ENCODE measurements at regions of chr1 and their contacts with region 1.

Region 1: DNA sequence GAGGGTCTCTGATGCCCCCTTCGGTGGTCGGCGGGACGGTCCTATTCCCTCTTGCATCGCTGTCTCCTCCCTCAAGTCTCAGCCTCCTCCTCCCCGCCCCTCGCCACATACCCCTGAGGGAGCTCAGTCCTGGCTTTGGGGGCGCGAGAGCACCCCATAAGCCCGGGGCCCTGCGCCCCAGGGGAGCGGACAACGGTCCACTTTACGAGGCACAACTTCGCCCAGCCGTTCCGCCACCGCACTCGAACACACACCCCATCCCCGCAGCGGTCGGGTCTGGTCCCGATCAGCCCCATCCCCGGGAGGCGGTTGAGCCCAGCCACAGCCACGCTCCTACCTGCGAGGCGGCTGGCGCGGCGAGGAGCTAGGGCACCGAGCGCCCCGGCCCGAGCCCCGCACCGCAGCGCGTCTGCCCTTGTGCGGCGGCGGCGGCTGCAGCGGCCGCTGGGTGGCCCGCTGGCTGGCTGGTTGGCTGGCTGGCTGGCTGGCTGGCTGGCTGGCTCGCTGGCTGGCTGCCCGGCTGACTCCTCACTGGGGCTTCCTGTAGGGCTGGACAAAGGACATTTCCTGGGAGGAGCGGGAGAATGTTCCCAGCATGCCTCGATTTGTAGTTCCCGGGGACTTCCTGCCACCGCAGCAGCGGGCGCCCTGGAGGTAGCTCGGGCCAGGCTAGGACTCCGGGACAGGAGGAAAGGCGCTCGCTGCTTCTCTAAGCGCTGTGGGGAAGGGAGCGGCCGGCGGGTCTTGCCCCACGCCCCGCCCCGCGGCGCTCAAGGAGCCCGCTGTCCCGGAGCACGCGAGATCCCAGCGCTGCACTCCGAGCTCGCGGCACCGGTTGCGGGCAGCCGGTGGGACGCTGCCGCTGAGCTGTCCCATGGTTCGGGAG is at the start of gene ZNF697:
- DNase-seq: peak; percentile 98 to 99
- ATAC-seq: peak; percentile 95
- H3K4me3 ChIP-seq: peak within 1 kb of the TSS; percentile 68 to 77
- H3K27ac ChIP-seq: peak within 1 kb of the TSS; percentile 33 to 68
- H3K4me1 ChIP-seq: peaks cover 0 to 4% of the 10 kb centered on the region in 2 donors
- H3K27me3 ChIP-seq: no peaks in the 10 kb centered on the region
- total RNA-seq, gene ZNF697: 5.1 to 6.0 TPM

Region 2: DNA sequence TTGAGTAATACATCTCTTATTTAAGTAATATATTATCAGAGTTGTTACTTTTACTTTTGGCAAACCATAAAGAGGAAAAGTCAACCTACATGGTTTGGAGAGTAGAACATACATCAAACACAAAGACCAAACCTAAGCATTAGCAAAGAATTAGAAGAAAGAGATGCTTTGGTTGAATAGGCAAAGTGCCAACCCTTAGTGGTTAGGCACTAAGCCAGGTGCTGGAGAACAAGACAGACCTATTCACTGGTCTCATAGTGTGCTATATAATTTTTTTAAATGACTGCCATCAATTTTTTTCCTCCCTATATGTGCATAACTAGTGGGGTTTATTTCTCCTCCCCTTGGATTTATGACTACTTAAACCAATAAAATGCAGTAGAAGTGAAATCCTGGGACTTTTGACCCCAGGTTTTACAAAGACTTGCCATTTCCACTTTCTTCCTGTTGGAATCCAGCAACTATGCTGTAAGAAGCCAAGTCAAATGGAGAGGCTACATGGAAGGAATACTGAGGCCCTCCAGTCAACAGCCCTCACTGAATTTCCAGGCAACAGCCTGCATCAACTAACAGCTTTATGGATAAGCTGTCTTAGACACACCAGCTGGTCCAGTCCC is 349.2 kb before region 1 on chr1:
- intact Hi-C with region 1: no loop called
- DNase-seq: no peak
- ATAC-seq: no peak
- H3K4me3 ChIP-seq: no peak overlapping the region
- H3K27ac ChIP-seq: no peak overlapping the region
- H3K4me1 ChIP-seq: no peaks in the 10 kb centered on the region
- H3K27me3 ChIP-seq: no peaks in the 10 kb centered on the region

Region 3: DNA sequence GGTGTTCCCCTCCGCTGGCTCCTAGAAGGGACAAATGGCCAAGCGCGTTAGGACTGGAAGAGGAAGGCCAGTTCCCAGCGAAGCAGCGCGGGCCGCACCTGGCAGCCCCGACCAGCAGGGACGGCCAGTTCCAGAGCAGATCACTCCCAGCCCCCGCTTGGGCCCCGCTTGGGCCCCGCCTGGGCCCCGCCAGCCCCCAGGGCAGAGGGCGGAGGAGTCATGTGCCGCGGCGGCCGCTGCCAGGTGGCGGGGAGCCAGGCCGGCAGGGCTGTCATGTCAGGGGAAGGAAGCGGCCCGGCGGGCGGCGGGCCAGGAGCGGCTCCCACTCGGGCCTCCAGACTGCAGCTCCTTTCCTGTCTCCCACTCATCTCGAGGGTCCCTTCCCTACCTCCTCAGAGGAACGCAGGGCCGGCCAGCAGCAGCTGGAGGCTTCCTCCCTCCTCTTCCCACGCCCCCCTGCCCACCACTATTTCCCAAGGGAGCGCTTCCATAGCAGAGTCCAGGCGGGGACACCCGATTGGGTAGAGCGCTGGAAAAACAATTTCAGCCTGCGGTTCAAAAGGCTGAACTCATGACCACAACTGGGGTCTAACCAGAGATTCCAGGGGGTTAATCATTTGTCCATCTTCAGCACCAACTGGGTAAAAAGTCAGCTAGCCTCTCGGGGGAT is 16.4 kb before region 1 on chr1:
- intact Hi-C with region 1: loop called in 1 of 2 experiments (anchors 1 kb)
- DNase-seq: peak; percentile 88 to 93
- ATAC-seq: peak; percentile 94
- H3K4me3 ChIP-seq: peak overlapping the region in 1 of 2 donors; percentile 45
- H3K27ac ChIP-seq: peak overlapping the region in 1 of 2 donors; percentile 64
- H3K4me1 ChIP-seq: peaks cover 3 to 5% of the 10 kb centered on the region in 2 donors
- H3K27me3 ChIP-seq: no peaks in the 10 kb centered on the region

Region 4: DNA sequence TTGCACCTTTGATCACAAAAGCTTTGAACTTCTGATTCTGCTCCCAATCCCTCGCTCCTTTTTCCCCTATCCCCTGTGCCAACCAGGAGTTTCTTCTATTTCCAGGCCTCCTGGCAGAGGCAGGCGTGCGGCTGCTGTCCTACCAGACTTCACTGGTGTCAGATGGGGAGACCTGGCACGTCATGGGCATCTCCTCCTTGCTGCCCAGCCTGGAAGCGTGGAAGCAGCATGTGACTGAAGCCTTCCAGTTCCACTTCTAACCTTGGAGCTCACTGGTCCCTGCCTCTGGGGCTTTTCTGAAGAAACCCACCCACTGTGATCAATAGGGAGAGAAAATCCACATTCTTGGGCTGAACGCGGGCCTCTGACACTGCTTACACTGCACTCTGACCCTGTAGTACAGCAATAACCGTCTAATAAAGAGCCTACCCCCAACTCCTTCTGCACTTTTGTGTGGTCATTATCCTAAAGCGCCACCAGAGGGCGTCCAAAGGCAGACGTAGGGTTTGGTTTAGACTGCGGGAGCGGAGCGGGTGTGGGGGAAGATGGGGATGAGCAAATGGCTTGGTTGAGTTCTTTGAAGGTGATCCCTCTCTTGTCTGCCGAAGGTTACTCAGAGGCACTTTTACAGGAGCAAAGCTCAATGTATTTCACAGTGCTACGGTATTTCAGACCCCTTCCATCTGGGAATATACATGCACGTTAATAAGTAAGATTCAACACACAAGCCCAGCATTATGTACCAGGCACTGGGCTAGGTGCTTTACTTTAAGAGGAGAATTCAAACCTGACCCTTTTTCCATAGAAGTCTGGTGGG is 96.0 kb after region 1 on chr1:
- intact Hi-C with region 1: no loop called
- DNase-seq: peak in 1 of 2 donors; percentile 63
- ATAC-seq: peak; percentile 68
- H3K4me3 ChIP-seq: no peak overlapping the region
- H3K27ac ChIP-seq: no peak overlapping the region
- H3K4me1 ChIP-seq: no peaks in the 10 kb centered on the region
- H3K27me3 ChIP-seq: no peaks in the 10 kb centered on the region

Measured in aorta (tissue), 5 donors.